ENCODE measurements at regions of chr15 and their contacts with region 1.

Region 1: DNA sequence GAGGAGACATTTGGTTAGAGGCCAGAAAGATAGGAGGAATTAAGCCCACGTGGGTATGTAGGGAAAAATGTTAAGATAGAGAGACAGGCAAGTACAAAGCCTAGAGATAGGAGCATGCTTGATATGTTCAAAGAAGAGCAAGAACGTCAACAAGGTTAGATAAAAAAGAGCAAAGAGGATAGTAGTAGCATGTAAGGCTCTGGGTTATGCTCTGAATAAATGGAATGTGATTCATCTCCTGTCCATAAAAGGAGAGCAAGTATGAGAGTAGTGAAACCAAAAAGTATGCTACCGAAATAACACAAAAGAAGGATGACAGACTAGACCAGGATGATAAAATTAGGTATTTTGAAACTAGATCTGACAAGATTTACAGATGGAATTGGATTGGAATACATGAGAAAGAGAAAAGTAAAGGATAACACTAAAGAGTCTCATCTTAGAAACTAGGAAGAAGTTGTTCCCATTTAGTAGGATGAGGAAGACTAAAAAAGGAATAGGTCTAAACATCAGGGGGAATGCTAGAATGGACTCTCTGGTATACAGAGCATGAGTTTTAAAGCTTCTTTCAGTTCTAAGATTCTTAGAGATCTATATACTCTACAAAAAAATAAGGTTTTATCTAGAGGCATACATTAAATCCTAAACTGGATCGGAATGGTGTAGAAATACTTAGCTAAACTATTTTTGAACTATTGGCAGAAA is 59.1 kb downstream of the TRPM7 start:
- DNase-seq: no peak
- H3K4me3 ChIP-seq: no peak overlapping the region
- H3K27ac ChIP-seq: no peak overlapping the region
- H3K4me1 ChIP-seq: no peaks in the 10 kb centered on the region
- H3K27me3 ChIP-seq: no peaks in the 10 kb centered on the region
- CTCF ChIP-seq: no peak

Region 2: GRCh38 chr15:50496692-50497091 is 130.8 kb before region 1 on chr15:
- intact Hi-C with region 1: loop called (anchors 10 kb)
- DNase-seq: no peak
- H3K4me3 ChIP-seq: no peak overlapping the region
- H3K27ac ChIP-seq: no peak overlapping the region
- H3K4me1 ChIP-seq: no peaks in the 10 kb centered on the region
- H3K27me3 ChIP-seq: no peaks in the 10 kb centered on the region
- CTCF ChIP-seq: no peak